ENCODE measurements at regions of chr1 and their contacts with region 1.

Region 1: GRCh38 chr1:162056043-162056442 is 13.4 kb upstream of the NOS1AP start:
- DNase-seq: peak; percentile 49
- ATAC-seq: peak; percentile 63
- H3K4me3 Mint-ChIP-seq: no peak overlapping the region
- H3K27ac Mint-ChIP-seq: no peak overlapping the region
- H3K4me1 Mint-ChIP-seq: no peaks in the 10 kb centered on the region
- H3K27me3 Mint-ChIP-seq: peaks cover 12% of the 10 kb centered on the region

Region 2: DNA sequence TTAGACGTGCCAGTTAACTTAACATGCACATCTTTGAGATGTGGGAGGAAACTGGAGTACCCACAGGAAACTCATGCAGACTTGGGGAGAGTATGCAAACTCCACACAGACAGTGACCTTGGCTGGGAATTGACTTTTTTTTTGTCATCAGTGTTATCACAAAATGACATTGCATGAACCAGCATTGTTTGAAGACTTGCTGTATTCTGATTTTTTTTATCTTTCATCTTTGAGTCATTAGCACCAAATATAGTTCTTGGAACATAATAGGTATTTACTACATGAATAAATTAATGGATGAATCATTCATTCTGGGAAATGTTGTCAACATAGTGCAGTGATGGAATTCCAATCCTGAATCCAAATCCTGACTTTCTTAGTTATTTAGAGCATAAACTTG is 212.9 kb before region 1 on chr1:
- CTCF ChIA-PET with region 1: no interaction called
- POLR2A ChIA-PET with region 1: no interaction called
- DNase-seq: no peak
- ATAC-seq: no peak
- H3K4me3 Mint-ChIP-seq: no peak overlapping the region
- H3K27ac Mint-ChIP-seq: no peak overlapping the region
- H3K4me1 Mint-ChIP-seq: no peaks in the 10 kb centered on the region
- H3K27me3 Mint-ChIP-seq: no peaks in the 10 kb centered on the region

Region 3: DNA sequence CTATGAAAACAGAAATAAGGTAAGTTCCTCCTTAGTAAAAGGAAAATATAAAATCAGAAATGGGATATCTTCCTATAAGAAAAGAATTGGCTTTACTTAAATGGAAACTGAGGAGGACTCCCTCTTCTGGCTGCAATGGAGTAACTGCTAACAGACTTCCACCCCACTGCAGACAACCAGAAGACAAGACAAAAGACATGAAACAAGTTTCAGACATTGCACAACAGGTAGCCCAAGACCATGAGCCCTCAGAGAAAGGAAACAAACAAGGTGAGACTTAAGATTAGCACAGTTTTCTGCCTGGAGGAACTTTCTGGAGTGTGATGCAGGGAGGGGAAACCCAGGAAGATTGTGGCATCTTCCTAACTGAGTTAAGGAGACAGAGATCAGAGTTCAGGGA is 15.4 kb before region 1 on chr1:
- CTCF ChIA-PET with region 1: interaction called, 10 read pairs
- POLR2A ChIA-PET with region 1: no interaction called
- DNase-seq: no peak
- ATAC-seq: no peak
- H3K4me3 Mint-ChIP-seq: no peak overlapping the region
- H3K27ac Mint-ChIP-seq: no peak overlapping the region
- H3K4me1 Mint-ChIP-seq: no peaks in the 10 kb centered on the region
- H3K27me3 Mint-ChIP-seq: peaks cover 10% of the 10 kb centered on the region

Region 4: DNA sequence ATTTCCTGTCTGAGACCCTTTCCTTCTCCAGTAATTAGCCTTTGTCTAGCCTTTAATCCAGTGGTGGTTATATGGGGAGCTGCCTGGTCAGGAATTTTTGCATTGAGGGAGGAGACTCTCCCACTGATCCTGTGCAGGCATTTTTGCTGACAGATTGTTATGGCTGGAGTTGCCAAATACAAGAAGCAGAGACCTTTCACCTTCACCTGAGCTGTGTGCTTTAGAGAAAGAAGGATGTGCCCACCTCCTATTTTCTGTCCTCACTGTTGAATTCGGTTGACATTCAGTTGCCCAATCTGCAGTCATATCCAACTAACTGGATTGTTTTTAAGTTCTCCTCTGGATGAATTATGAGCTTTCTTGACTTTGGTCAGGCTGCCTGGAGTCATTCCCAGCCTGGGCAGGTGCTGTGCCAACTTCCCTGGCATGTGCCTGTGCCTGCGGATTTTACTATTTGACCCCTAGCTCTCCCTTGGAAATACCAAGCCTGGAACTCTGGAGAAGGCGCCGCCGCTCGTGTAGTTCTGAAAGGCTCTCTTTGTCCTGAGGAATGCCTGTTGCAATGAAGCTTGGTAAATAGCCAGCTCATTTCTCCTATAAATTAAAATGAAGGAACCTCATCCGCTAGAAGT is 157.4 kb after region 1 on chr1:
- CTCF ChIA-PET with region 1: no interaction called
- POLR2A ChIA-PET with region 1: no interaction called
- DNase-seq: no peak
- ATAC-seq: no peak
- H3K4me3 Mint-ChIP-seq: no peak overlapping the region
- H3K27ac Mint-ChIP-seq: no peak overlapping the region
- H3K4me1 Mint-ChIP-seq: no peaks in the 10 kb centered on the region
- H3K27me3 Mint-ChIP-seq: peaks cover 5% of the 10 kb centered on the region

Region 5: GRCh38 chr1:162391790-162392563 is 335.9 kb after region 1 on chr1:
- CTCF ChIA-PET with region 1: interaction called, 11 read pairs
- POLR2A ChIA-PET with region 1: no interaction called
- DNase-seq: peak; percentile 33
- ATAC-seq: no peak
- H3K4me3 Mint-ChIP-seq: no peak overlapping the region
- H3K27ac Mint-ChIP-seq: no peak overlapping the region
- H3K4me1 Mint-ChIP-seq: peaks cover 1% of the 10 kb centered on the region
- H3K27me3 Mint-ChIP-seq: peaks cover 19% of the 10 kb centered on the region